Activated CD4-positive, alpha-beta memory T cell treated with anti-CD3 and anti-CD28 coated beads for 36 hours (primary cell): ENCODE measurements at regions of chr5 and their contacts with region 1.

Region 1: GRCh38 chr5:140868721-140869554 is at the start of gene PCDHA11:
- DNase-seq: no peak
- H3K4me3 Mint-ChIP-seq: no peak within 1 kb of the TSS
- H3K27ac Mint-ChIP-seq: no peak within 1 kb of the TSS
- H3K4me1 Mint-ChIP-seq: no peaks in the 10 kb centered on the region
- H3K27me3 Mint-ChIP-seq: peaks cover 7% of the 10 kb centered on the region
- total RNA-seq, gene PCDHA11: not detected

Region 2: DNA sequence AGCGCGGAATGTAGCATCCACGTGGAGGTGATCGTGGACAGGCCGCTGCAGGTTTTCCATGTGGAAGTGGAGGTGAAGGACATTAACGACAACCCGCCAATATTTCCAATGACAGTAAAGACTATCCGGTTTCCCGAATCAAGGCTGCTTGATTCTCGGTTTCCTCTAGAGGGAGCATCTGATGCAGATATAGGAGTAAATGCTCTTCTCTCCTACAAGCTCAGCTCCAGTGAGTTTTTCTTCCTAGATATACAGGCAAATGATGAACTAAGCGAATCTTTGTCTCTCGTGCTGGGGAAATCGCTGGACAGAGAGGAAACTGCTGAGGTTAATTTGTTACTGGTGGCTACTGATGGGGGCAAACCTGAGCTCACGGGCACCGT is 73.7 kb before region 1 on chr5:
- CTCF ChIA-PET with region 1: no interaction called
- POLR2A ChIA-PET with region 1: no interaction called
- intact Hi-C with region 1: loop called (anchors 10 kb)
- DNase-seq: no peak
- H3K4me3 Mint-ChIP-seq: no peak overlapping the region
- H3K27ac Mint-ChIP-seq: no peak overlapping the region
- H3K4me1 Mint-ChIP-seq: no peaks in the 10 kb centered on the region
- H3K27me3 Mint-ChIP-seq: peaks cover 31% of the 10 kb centered on the region